Heart right ventricle (tissue), 16 donors: ENCODE measurements at regions of chr12 and their contacts with region 1.

Region 1: GRCh38 chr12:72872238-72872887 is 600.2 kb downstream of the TRHDE start:
- DNase-seq: no peak
- ATAC-seq: no peak
- H3K4me3 ChIP-seq: no peak overlapping the region
- H3K27ac ChIP-seq: no peak overlapping the region
- H3K4me1 ChIP-seq: no peaks in the 10 kb centered on the region
- H3K27me3 ChIP-seq: no peaks in the 10 kb centered on the region
- CTCF ChIP-seq: no peak

Region 2: DNA sequence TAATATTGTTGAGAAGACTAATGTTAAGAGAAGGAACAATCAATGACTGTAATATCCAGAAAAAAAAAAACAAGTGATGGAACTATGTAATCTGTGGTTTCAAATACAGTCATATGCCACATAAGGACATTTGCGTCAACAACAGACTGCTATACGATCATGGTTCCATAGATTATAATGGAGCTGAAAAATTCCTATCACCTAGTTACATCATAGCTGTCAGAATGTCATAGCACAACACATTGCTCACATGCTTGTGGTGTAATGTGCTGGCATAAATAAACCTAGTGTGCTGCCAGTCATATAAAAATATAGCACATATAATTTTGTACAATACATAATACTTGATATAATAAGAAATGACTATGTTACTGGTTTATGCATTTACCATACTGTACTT is 53.4 kb after region 1 on chr12:
- intact Hi-C with region 1: loop called in 2 of 10 experiments (anchors 5 to 10 kb)
- DNase-seq: no peak
- ATAC-seq: no peak
- H3K4me3 ChIP-seq: no peak overlapping the region
- H3K27ac ChIP-seq: no peak overlapping the region
- H3K4me1 ChIP-seq: no peaks in the 10 kb centered on the region
- H3K27me3 ChIP-seq: no peaks in the 10 kb centered on the region
- CTCF ChIP-seq: no peak

Region 3: GRCh38 chr12:72937486-72937885 is 65.1 kb after region 1 on chr12:
- intact Hi-C with region 1: loop called in 1 of 10 experiments (anchors 10 kb)
- DNase-seq: no peak
- ATAC-seq: no peak
- H3K4me3 ChIP-seq: no peak overlapping the region
- H3K27ac ChIP-seq: no peak overlapping the region
- H3K4me1 ChIP-seq: no peaks in the 10 kb centered on the region
- H3K27me3 ChIP-seq: no peaks in the 10 kb centered on the region
- CTCF ChIP-seq: no peak